Ovary (tissue), 10 donors: ENCODE measurements at regions of chr6 and their contacts with region 1.

Region 1: GRCh38 chr6:42043787-42044475 is 6.4 kb upstream of the TAF8 start:
- DNase-seq: peak; percentile 83 to 93 (median 90)
- H3K4me3 ChIP-seq: no peak overlapping the region
- H3K27ac ChIP-seq: no peak overlapping the region
- H3K4me1 ChIP-seq: peaks cover 2% of the 10 kb centered on the region
- H3K27me3 ChIP-seq: no peaks in the 10 kb centered on the region
- CTCF ChIP-seq: peak; percentile 92
- EP300 ChIP-seq: no peak
- POLR2A ChIP-seq: no peak

Region 2: DNA sequence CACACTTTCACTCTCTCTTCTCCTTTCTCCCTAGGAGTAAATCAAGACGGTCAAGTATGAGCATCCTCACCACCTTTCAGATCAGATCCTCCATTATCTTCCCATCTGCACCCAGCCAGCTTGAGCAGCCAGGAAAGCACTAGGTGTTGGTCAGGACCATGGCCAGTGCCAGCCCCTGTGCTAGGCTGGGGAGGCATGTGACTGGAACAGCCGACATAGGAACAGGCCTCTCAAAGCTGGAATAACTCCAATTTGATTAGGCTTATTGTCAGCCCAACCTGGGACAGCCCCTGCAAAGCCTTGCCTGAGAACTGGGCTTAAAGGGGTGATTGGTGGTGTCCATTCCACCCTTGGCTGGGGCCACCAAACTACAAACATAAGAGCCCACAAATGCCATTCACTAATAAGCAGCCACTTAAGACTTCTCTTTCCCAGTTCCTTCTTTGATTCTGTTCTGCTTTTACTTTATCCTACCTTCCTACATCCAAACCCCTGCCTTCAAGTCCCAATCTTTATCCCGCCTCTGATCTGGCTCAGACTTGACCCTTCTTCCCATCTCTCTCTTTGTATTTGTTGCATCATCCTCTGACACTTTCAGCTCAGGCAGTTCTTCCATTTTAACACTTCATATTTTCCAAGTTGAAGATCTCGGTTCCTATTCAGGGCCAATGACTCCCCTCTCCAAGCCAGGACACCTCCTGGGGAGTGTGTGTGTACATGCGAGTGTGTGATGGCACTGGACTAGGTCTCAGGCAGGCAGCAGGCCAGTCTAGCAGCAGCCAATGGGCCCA is 876.6 kb before region 1 on chr6:
- intact Hi-C with region 1: no loop called
- DNase-seq: no peak
- H3K4me3 ChIP-seq: no peak overlapping the region
- H3K27ac ChIP-seq: no peak overlapping the region
- H3K4me1 ChIP-seq: no peaks in the 10 kb centered on the region
- H3K27me3 ChIP-seq: no peaks in the 10 kb centered on the region
- CTCF ChIP-seq: no peak
- EP300 ChIP-seq: no peak
- POLR2A ChIP-seq: no peak

Region 3: DNA sequence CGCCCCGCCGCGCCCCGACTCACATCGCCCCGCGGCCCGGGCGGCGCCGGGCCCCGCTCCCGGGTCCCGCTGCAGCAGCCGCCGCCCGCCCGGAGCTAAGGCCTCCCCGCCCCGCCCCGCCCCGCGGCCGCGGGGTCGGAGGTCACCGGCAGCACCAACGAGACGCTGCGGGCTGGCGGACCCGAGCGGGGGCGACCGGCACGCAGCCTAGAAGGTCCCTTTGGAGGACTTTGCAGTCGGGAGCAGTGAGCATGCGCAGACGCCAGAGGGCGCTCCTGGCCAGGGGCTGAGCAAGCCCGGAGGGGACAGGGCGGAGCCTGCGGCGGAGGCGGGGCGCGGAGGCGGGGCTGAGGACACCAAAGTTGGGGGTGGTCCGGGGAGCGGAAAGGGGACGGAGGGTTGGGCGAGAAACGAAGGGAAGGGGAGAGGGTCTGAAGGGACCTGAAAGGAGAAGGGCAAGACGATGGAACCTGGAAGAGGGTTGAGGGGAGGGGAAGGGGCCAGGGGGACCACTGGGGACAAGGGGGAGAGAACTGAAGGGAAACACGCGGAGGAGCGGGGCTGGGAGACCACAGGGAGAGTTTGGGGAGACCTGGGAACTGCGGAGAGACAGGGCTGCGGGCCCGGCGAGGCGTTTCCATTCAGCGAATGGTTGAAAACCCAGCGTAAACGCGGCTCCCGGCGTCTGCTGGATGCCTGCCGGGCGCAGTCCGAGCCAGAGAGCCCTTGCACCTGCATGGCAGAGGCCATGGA is 264.0 kb before region 1 on chr6 and contains the start of gene FRS3:
- intact Hi-C with region 1: loop called in 3 of 4 experiments (anchors 5 kb)
- DNase-seq: peak; percentile 98 to 99 (median 99)
- H3K4me3 ChIP-seq: peak within 1 kb of the TSS; percentile 75
- H3K27ac ChIP-seq: peak within 1 kb of the TSS; percentile 26 to 65
- H3K4me1 ChIP-seq: peaks cover 4% of the 10 kb centered on the region
- H3K27me3 ChIP-seq: no peaks in the 10 kb centered on the region
- CTCF ChIP-seq: peak; percentile 93 to 97 (median 94)
- EP300 ChIP-seq: no peak
- POLR2A ChIP-seq: peak; percentile 39
- total RNA-seq, gene FRS3: 2.6 to 8.4 (median 6.2) TPM

Region 4: GRCh38 chr6:41936073-41936837 is 107.7 kb before region 1 on chr6:
- intact Hi-C with region 1: loop called (anchors 5 to 10 kb)
- DNase-seq: peak in 4 of 5 donors; percentile 34 to 62 (median 49)
- H3K4me3 ChIP-seq: no peak overlapping the region
- H3K27ac ChIP-seq: no peak overlapping the region
- H3K4me1 ChIP-seq: peaks cover 10% of the 10 kb centered on the region
- H3K27me3 ChIP-seq: no peaks in the 10 kb centered on the region
- CTCF ChIP-seq: peak; percentile 34 to 56 (median 46)
- EP300 ChIP-seq: no peak
- POLR2A ChIP-seq: no peak

Region 5: DNA sequence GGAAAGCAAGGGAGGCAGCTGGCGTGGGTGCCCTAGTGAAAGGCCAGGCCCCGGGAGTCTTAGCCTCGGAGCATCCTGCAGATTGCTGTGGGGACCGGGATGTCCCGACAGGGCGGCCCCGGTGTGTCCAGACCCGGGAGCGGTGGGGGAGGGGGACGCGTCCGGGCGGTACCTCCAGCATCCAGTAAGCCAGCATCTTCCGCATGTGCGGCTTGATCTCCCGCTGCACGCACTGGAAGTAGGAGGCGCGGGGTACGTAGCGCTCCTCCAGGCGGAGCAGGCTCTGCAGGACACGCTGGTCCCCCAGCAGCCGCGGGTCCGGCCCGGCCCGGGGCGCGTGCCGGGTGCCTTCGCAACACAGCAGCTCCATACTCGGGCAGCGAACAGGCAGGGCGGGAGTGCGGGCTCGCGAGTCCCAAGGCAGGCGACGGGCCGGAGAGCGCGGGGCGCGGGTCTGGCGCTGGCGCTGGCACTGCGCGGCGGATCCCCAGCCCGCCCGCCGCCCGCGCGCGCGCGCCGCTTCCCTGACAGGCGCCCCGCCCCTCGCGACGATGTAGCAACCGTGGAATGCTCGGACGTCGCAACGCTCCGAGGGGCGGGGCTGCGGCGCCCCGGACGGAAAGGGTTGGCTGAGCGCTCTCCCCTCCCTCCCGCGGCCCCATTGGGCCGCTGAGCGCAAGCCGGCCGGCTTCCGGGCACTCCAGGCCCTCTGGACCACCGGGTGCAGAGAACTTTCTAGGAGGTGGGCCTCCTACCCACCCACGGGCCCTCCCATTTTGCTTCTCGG is 102.5 kb before region 1 on chr6 and contains the start of gene CCND3:
- intact Hi-C with region 1: loop called (anchors 5 to 10 kb)
- DNase-seq: peak; percentile 87 to 93 (median 89)
- H3K4me3 ChIP-seq: peak within 1 kb of the TSS; percentile 61
- H3K27ac ChIP-seq: peak within 1 kb of the TSS; percentile 29 to 31
- H3K4me1 ChIP-seq: peaks cover 10% of the 10 kb centered on the region
- H3K27me3 ChIP-seq: no peaks in the 10 kb centered on the region
- CTCF ChIP-seq: peak in 1 of 3 donors; percentile 12
- EP300 ChIP-seq: no peak
- POLR2A ChIP-seq: peak; percentile 12
- total RNA-seq, gene CCND3: 22.7 to 217 (median 58.4) TPM

Region 6: DNA sequence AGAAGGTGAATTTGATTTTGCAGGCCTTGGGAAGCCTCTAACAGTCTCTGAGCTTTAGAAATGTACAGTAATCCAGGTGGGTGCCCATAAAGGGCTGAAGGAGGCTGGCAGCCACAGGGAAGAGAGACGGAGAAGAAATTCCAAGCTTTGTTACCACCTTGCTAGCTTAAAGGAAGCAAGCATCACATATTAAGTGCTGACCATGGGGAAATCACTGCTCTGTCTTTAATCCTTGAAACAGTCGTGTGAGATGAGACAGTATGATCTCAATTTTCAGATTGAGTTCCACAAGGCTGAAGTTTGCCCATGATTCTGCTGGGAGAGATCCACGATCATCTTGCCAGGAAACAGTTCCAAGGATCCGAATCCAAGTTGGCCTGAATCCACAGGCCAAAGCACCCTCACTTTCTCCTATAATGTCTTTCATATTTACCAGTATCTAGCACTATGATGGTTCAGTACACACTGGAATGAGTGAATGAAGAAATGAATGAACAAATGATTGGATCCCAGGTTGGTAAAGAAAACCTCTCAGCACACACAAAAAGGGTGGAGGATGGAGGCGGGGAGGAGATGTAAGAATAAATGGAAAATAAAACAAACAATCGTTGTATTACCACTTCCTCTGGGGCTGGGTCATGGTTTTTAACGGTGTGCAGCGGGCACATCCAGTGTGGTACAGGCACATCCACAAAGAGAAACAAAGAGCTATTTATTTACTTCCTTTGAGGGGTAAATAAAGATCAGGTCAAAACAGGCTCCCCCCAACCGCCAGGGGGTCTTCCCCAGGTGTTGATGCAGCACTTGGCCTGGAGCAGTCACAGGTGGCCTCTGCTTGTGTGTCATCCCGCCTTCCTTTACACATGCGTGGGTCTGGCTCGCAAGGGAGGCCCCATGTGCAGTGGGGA is 21.8 kb before region 1 on chr6:
- intact Hi-C with region 1: no loop called
- DNase-seq: no peak
- H3K4me3 ChIP-seq: no peak overlapping the region
- H3K27ac ChIP-seq: no peak overlapping the region
- H3K4me1 ChIP-seq: peaks cover 7% of the 10 kb centered on the region
- H3K27me3 ChIP-seq: no peaks in the 10 kb centered on the region
- CTCF ChIP-seq: no peak
- EP300 ChIP-seq: no peak
- POLR2A ChIP-seq: no peak

Region 7: GRCh38 chr6:42086046-42087035 is 42.4 kb after region 1 on chr6:
- intact Hi-C with region 1: no loop called
- DNase-seq: no peak
- H3K4me3 ChIP-seq: no peak overlapping the region
- H3K27ac ChIP-seq: no peak overlapping the region
- H3K4me1 ChIP-seq: no peaks in the 10 kb centered on the region
- H3K27me3 ChIP-seq: no peaks in the 10 kb centered on the region
- CTCF ChIP-seq: no peak
- EP300 ChIP-seq: no peak
- POLR2A ChIP-seq: no peak